ENCODE measurements at regions of chrX and their contacts with region 1.

Region 1: GRCh38 chrX:3713225-3713936 is at the start of gene PRKX:
- DNase-seq: peak; percentile 77
- ATAC-seq: peak; percentile 85
- H3K4me3 Mint-ChIP-seq: peak within 1 kb of the TSS; percentile 93
- H3K27ac Mint-ChIP-seq: peak within 1 kb of the TSS; percentile 58
- H3K4me1 Mint-ChIP-seq: peaks cover 10% of the 10 kb centered on the region
- H3K27me3 Mint-ChIP-seq: no peaks in the 10 kb centered on the region
- total RNA-seq, gene PRKX: 35.0 to 36.3 TPM

Region 2: DNA sequence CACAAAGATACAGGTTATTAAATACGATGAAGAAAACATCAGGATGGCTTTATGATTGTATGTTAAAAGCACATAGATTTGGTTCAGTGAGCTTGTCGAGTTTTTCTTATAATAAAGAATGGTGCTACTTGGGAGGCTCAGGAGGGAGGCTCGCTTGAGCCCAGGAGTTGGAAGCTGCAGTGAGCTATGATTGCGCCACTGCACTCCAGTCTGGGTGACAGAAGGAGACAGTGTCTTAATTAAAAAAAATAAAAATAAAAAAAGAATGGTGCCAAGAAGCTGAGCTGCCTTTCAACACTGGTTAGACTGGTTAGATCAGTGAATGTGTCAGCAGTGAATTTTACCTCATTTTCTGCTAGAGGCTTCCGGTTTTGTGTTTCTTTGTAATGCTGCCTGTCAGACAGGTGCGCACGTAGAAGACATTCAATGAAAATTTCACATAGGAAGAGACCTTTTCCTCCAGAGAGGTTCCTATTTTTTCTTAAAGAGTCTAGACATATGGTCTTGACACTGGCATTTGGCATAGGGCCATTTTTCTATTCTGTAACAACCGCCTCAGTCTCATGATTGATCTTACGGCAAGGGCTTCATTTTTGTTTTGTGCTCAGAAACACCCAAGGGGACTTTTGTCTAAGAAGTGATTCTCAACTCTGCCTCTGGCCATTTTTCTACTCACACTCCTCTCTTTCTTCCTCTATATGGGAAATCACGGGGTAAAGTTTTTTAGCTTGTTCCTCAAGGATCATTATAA is 687.1 kb before region 1 on chrX:
- CTCF ChIA-PET with region 1: no interaction called
- POLR2A ChIA-PET with region 1: no interaction called
- intact Hi-C with region 1: no loop called
- DNase-seq: no peak
- ATAC-seq: no peak
- H3K4me3 Mint-ChIP-seq: no peak overlapping the region
- H3K27ac Mint-ChIP-seq: no peak overlapping the region
- H3K4me1 Mint-ChIP-seq: no peaks in the 10 kb centered on the region
- H3K27me3 Mint-ChIP-seq: peaks cover 2% of the 10 kb centered on the region

Region 3: DNA sequence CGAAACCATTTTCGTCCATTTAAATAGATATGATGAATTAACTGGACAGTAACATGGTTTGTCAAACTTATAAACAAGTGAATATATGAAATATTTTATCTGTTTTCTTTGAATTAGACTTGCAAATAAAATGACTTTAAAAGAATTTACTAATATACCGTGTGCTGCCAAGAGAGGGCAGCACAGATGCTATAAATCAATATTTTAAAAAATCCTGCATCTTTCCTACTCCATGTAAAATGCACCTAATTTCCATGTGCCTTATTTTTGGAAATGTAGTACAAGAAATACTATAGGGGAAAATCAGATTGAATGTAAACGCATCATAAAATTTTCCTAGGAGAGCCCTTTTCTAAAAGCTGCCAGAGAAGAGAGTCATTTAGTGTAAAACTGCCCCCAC is 62.1 kb before region 1 on chrX:
- CTCF ChIA-PET with region 1: no interaction called
- POLR2A ChIA-PET with region 1: no interaction called
- intact Hi-C with region 1: loop called in 1 of 2 experiments (anchors 5 kb)
- DNase-seq: no peak
- ATAC-seq: no peak
- H3K4me3 Mint-ChIP-seq: no peak overlapping the region
- H3K27ac Mint-ChIP-seq: no peak overlapping the region
- H3K4me1 Mint-ChIP-seq: peaks cover 2% of the 10 kb centered on the region
- H3K27me3 Mint-ChIP-seq: no peaks in the 10 kb centered on the region

Region 4: DNA sequence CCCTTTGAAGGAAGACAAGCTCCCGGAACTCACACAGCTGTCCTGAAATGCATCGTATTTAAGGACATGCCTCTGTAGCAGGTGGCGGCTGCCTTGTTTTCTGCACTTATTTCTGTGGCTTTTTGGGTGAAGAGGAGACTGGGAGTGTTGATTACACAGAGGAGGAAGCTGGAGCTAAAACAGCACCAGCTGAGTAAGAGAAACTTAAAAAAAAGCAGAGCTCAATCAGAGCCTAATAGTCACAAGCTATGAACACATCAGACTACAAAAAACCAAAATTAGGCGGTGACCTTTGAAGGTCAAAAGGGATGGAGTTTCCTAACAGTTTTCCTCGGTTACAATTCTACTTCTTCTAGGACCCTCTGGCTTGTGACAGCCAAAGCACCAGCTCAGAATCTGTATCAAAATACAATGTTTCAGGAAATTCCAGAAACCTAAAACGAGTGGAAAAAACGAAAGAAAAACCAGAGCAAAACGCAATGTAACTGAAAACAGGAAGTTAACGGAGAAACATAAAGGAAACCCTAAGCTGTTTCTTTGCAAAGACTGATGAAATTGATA is 13.5 kb before region 1 on chrX:
- CTCF ChIA-PET with region 1: no interaction called
- POLR2A ChIA-PET with region 1: no interaction called
- intact Hi-C with region 1: loop called in 1 of 2 experiments (anchors 1 kb)
- DNase-seq: no peak
- ATAC-seq: peak; percentile 74
- H3K4me3 Mint-ChIP-seq: peak overlapping the region; percentile 69
- H3K27ac Mint-ChIP-seq: peak overlapping the region; percentile 94
- H3K4me1 Mint-ChIP-seq: peaks cover 50% of the 10 kb centered on the region
- H3K27me3 Mint-ChIP-seq: no peaks in the 10 kb centered on the region

Region 5: GRCh38 chrX:4059893-4060292 is 346.5 kb after region 1 on chrX:
- CTCF ChIA-PET with region 1: no interaction called
- POLR2A ChIA-PET with region 1: no interaction called
- intact Hi-C with region 1: no loop called
- DNase-seq: no peak
- ATAC-seq: no peak
- H3K4me3 Mint-ChIP-seq: no peak overlapping the region
- H3K27ac Mint-ChIP-seq: no peak overlapping the region
- H3K4me1 Mint-ChIP-seq: no peaks in the 10 kb centered on the region
- H3K27me3 Mint-ChIP-seq: no peaks in the 10 kb centered on the region